GM23248 (cell line): ENCODE measurements at regions of chr7 and their contacts with region 1.

Region 1: GRCh38 chr7:19982841-19983835 is 209.7 kb upstream of the TMEM196 start:
- DNase-seq: peak; percentile 87
- H3K4me3 ChIP-seq: no peak overlapping the region
- H3K27ac ChIP-seq: no peak overlapping the region
- H3K4me1 ChIP-seq: no peaks in the 10 kb centered on the region
- H3K27me3 ChIP-seq: no peaks in the 10 kb centered on the region

Region 2: DNA sequence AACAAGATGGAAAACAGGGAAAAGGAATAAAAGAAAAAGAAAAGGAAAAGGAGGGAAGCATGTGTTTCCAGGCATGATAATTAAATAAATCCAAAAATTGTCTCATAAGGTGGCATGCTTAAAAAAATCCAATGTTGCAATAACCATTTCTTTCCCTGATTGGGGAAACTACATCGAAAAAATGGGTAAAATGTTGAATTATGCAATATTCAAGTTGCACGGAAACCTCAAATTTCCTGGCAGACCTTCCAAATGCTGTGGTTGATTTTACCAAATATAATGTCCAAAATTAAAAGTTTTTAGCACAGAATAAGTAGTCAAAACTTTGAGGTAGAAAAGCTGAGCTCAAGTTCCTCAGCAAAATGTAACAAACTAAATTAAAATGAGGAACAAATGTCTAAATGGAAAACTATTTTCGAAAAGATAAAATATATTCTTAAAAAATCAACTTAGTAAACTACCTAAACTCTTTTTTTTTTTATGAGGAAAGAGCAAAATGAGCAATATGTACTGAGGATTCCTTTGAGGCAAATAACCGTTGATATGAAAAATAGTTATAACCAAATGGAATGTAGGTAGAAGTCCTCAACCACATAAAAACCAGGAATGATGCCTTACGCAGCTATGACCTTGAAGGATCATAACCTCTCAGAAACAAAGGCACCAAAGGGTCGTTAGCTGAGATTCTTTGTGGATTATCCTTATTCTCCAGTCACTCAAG is 181.4 kb after region 1 on chr7:
- in situ Hi-C with region 1: loop called (anchors 10 kb)
- DNase-seq: peak; percentile 76
- H3K4me3 ChIP-seq: no peak overlapping the region; the same call in 1 of the 2 replicates
- H3K27ac ChIP-seq: peak overlapping the region; percentile 56
- H3K4me1 ChIP-seq: peaks cover 35% of the 10 kb centered on the region
- H3K27me3 ChIP-seq: no peaks in the 10 kb centered on the region